ENCODE measurements at regions of chr5 and their contacts with region 1.

Region 1: GRCh38 chr5:149656576-149657182 is 73.4 kb upstream of the PPARGC1B start:
- DNase-seq: peak; percentile 35
- ATAC-seq: no peak
- H3K4me3 ChIP-seq: no peak overlapping the region
- H3K27ac ChIP-seq: no peak overlapping the region
- H3K4me1 ChIP-seq: no peaks in the 10 kb centered on the region
- H3K27me3 ChIP-seq: no peaks in the 10 kb centered on the region
- CTCF ChIP-seq: peak; percentile 82

Region 2: GRCh38 chr5:149646564-149646963 is 10.1 kb before region 1 on chr5:
- CTCF ChIA-PET with region 1: no interaction called
- POLR2A ChIA-PET with region 1: no interaction called
- in situ Hi-C with region 1: no loop called
- intact Hi-C with region 1: no loop called
- DNase-seq: no peak
- ATAC-seq: no peak
- H3K4me3 ChIP-seq: no peak overlapping the region
- H3K27ac ChIP-seq: no peak overlapping the region
- H3K4me1 ChIP-seq: no peaks in the 10 kb centered on the region
- H3K27me3 ChIP-seq: no peaks in the 10 kb centered on the region
- CTCF ChIP-seq: no peak

Region 3: GRCh38 chr5:149667084-149667828 is 10.6 kb after region 1 on chr5:
- CTCF ChIA-PET with region 1: interaction called, 11 read pairs
- POLR2A ChIA-PET with region 1: no interaction called
- in situ Hi-C with region 1: no loop called
- intact Hi-C with region 1: no loop called
- DNase-seq: peak; percentile 13
- ATAC-seq: peak; percentile 58; the same call in 1 of the 2 replicates
- H3K4me3 ChIP-seq: no peak overlapping the region
- H3K27ac ChIP-seq: no peak overlapping the region
- H3K4me1 ChIP-seq: no peaks in the 10 kb centered on the region
- H3K27me3 ChIP-seq: no peaks in the 10 kb centered on the region
- CTCF ChIP-seq: peak; percentile 89

Measured in Panc1 (cell line).